ENCODE measurements at regions of chr15 and their contacts with region 1.

Region 1: GRCh38 chr15:45118131-45118588 is 4.0 kb downstream of the DUOXA2 start:
- DNase-seq: peak; percentile 88 to 92
- H3K4me3 ChIP-seq: no peak overlapping the region
- H3K4me3 Mint-ChIP-seq: peak overlapping the region; percentile 46
- H3K27ac Mint-ChIP-seq: peak overlapping the region; percentile 47
- H3K4me1 ChIP-seq: peaks cover 14% of the 10 kb centered on the region; the same call in 1 of the 2 replicates
- H3K4me1 Mint-ChIP-seq: peaks cover 27% of the 10 kb centered on the region
- H3K27me3 ChIP-seq: no peaks in the 10 kb centered on the region
- H3K27me3 Mint-ChIP-seq: peaks cover 4% of the 10 kb centered on the region
- CTCF ChIP-seq: peak; percentile 95 to 99

Region 2: DNA sequence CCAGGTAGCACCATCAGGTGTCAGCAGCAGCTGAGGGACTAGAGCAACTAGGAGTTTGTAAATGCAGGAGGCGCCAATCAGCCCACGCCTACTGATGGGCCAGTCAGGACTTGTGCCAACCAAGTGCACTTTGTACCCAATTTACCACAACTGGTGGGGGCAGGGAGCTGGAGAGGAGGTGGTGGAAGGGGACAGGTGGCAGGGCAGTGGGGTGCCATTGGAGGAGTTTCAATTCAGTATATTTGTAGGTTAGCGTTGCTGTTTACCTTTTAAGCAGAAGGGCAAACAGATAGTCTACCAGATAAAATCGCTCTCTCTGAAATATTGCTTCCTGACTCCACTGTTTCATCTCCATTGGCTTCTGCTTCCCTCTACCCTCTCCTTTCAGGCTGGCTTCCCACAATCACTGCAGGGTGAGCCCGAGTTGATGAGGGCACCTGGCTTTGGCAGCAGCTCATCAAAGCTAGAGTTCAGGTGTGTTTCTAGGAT is 306.1 kb before region 1 on chr15:
- CTCF ChIA-PET with region 1: no interaction called
- POLR2A ChIA-PET with region 1: no interaction called
- intact Hi-C with region 1: no loop called
- DNase-seq: peak in 1 of 2 experiments; percentile 19
- H3K4me3 ChIP-seq: no peak overlapping the region
- H3K4me3 Mint-ChIP-seq: no peak overlapping the region
- H3K27ac Mint-ChIP-seq: no peak overlapping the region
- H3K4me1 ChIP-seq: no peaks in the 10 kb centered on the region
- H3K4me1 Mint-ChIP-seq: peaks cover 9% of the 10 kb centered on the region
- H3K27me3 ChIP-seq: no peaks in the 10 kb centered on the region
- H3K27me3 Mint-ChIP-seq: no peaks in the 10 kb centered on the region
- CTCF ChIP-seq: no peak

Region 3: DNA sequence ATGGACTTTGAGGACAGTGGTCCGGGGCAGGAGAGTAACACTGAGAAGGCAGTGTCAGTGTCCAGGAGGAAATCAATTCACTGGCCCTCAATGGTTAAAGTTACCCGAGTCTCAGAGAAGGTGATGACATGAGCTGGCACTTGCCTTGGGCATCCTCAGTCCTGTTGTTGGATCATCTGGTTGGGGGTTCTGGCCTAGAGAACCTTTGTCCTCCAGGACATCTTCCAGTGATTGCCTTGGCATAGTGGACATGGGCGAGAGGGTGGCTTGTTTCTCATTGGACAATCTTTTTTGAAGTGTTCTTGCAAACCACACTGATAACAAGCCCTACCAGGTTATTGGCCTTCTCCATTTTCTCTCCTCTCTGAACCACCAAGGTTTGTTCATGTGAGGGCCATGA is 245.1 kb before region 1 on chr15:
- CTCF ChIA-PET with region 1: no interaction called
- POLR2A ChIA-PET with region 1: no interaction called
- intact Hi-C with region 1: no loop called
- DNase-seq: no peak
- H3K4me3 ChIP-seq: no peak overlapping the region
- H3K4me3 Mint-ChIP-seq: no peak overlapping the region
- H3K27ac Mint-ChIP-seq: no peak overlapping the region
- H3K4me1 ChIP-seq: no peaks in the 10 kb centered on the region
- H3K4me1 Mint-ChIP-seq: no peaks in the 10 kb centered on the region
- H3K27me3 ChIP-seq: no peaks in the 10 kb centered on the region
- H3K27me3 Mint-ChIP-seq: peaks cover 4% of the 10 kb centered on the region
- CTCF ChIP-seq: no peak

Region 4: GRCh38 chr15:44968475-44968874 is 149.7 kb before region 1 on chr15:
- CTCF ChIA-PET with region 1: interaction called, 15 read pairs
- POLR2A ChIA-PET with region 1: no interaction called
- intact Hi-C with region 1: no loop called
- DNase-seq: no peak
- H3K4me3 ChIP-seq: no peak overlapping the region
- H3K4me3 Mint-ChIP-seq: no peak overlapping the region
- H3K27ac Mint-ChIP-seq: no peak overlapping the region
- H3K4me1 ChIP-seq: no peaks in the 10 kb centered on the region
- H3K4me1 Mint-ChIP-seq: no peaks in the 10 kb centered on the region
- H3K27me3 ChIP-seq: no peaks in the 10 kb centered on the region
- H3K27me3 Mint-ChIP-seq: no peaks in the 10 kb centered on the region
- CTCF ChIP-seq: no peak

Region 5: DNA sequence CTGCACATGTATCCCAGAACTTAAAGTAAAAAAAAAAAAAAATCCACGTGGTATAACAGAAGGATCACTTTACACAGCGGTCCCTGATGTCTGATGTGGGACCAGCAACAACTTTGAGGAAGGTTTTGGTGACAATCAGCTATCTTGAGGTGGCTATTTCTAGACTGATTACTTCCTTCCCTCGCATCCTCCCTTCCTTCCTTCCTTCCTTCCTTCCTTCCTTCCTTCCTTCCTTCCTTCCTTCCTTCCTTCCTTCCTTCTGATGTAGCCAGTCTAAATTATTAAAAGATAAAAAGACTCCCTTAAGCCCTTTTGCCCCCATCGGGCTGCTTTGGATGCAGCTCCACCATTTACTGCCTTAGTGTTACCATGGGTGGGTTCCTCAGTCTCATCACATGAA is 80.2 kb before region 1 on chr15:
- CTCF ChIA-PET with region 1: interaction called, 23 read pairs
- POLR2A ChIA-PET with region 1: no interaction called
- intact Hi-C with region 1: loop called (anchors 1 kb)
- DNase-seq: no peak
- H3K4me3 ChIP-seq: no peak overlapping the region
- H3K4me3 Mint-ChIP-seq: no peak overlapping the region
- H3K27ac Mint-ChIP-seq: no peak overlapping the region
- H3K4me1 ChIP-seq: 0 out of 2 replicates have a peak, but pooled peaks cover 5% of the 10 kb centered on the region
- H3K4me1 Mint-ChIP-seq: peaks cover 12% of the 10 kb centered on the region
- H3K27me3 ChIP-seq: no peaks in the 10 kb centered on the region
- H3K27me3 Mint-ChIP-seq: no peaks in the 10 kb centered on the region
- CTCF ChIP-seq: no peak

Region 6: DNA sequence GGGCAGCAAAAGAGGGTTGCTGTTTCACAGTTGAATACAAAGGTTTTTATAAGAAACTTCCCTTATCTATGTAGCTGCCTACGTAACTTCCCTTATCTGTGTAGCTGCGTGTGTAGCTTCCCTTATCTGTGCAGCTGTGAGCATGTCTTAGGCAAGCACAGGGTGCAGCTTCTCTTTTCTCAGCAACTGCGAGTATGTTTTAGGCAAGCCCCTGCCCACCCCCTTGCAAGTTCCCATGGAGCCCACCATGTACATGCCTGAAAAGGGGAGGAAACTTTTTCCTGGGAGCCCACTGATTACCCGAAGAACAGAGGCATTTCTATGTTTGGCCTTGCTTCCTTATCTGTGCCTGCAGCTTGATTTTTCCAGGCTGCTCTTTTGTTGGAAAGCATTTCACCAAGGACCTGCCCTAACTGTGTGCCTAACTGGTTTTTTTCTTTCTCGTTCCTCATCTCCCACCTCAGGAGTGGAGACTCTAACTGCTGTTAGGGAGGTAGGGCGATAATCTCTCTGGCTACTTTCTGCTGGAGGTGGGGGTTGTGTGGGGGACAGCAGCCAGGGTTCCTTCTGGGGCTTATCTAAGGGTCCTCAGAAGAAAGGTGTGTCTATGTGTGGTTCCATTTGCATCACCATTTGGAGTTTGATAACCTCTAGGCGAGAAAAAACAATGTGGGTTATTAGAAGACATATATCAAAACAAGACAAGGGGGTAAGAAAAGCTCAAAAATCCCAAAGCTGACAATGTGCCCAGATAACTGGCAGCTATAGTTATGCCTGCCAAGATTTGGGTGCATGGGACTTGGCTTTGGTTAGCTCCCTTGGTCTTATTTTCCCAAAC is 69.1 kb before region 1 on chr15:
- CTCF ChIA-PET with region 1: interaction called, 13 read pairs
- POLR2A ChIA-PET with region 1: no interaction called
- intact Hi-C with region 1: no loop called
- DNase-seq: peak; percentile 65 to 68
- H3K4me3 ChIP-seq: no peak overlapping the region
- H3K4me3 Mint-ChIP-seq: peak overlapping the region; percentile 56
- H3K27ac Mint-ChIP-seq: peak overlapping the region; percentile 87
- H3K4me1 ChIP-seq: peaks cover 26% of the 10 kb centered on the region
- H3K4me1 Mint-ChIP-seq: peaks cover 12% of the 10 kb centered on the region
- H3K27me3 ChIP-seq: no peaks in the 10 kb centered on the region
- H3K27me3 Mint-ChIP-seq: no peaks in the 10 kb centered on the region
- CTCF ChIP-seq: no peak

Region 7: GRCh38 chr15:45091161-45091560 is 27.0 kb before region 1 on chr15:
- CTCF ChIA-PET with region 1: interaction called, 19 read pairs
- POLR2A ChIA-PET with region 1: interaction called, 3 read pairs
- intact Hi-C with region 1: no loop called
- DNase-seq: peak in 1 of 2 experiments; percentile 45
- H3K4me3 ChIP-seq: no peak overlapping the region
- H3K4me3 Mint-ChIP-seq: peak overlapping the region; percentile 14
- H3K27ac Mint-ChIP-seq: peak overlapping the region; percentile 59
- H3K4me1 ChIP-seq: peaks cover 41% of the 10 kb centered on the region
- H3K4me1 Mint-ChIP-seq: peaks cover 21% of the 10 kb centered on the region
- H3K27me3 ChIP-seq: no peaks in the 10 kb centered on the region
- H3K27me3 Mint-ChIP-seq: no peaks in the 10 kb centered on the region
- CTCF ChIP-seq: no peak

Region 8: GRCh38 chr15:45304711-45305110 is 186.6 kb after region 1 on chr15:
- CTCF ChIA-PET with region 1: no interaction called
- POLR2A ChIA-PET with region 1: no interaction called
- intact Hi-C with region 1: no loop called
- DNase-seq: no peak
- H3K4me3 ChIP-seq: no peak overlapping the region
- H3K4me3 Mint-ChIP-seq: no peak overlapping the region
- H3K27ac Mint-ChIP-seq: no peak overlapping the region
- H3K4me1 ChIP-seq: peaks cover 32% of the 10 kb centered on the region
- H3K4me1 Mint-ChIP-seq: peaks cover 29% of the 10 kb centered on the region
- H3K27me3 ChIP-seq: no peaks in the 10 kb centered on the region
- H3K27me3 Mint-ChIP-seq: no peaks in the 10 kb centered on the region
- CTCF ChIP-seq: no peak